CD4-positive, alpha-beta T cell (primary cell): ENCODE measurements at regions of chr17 and their contacts with region 1.

Region 1: DNA sequence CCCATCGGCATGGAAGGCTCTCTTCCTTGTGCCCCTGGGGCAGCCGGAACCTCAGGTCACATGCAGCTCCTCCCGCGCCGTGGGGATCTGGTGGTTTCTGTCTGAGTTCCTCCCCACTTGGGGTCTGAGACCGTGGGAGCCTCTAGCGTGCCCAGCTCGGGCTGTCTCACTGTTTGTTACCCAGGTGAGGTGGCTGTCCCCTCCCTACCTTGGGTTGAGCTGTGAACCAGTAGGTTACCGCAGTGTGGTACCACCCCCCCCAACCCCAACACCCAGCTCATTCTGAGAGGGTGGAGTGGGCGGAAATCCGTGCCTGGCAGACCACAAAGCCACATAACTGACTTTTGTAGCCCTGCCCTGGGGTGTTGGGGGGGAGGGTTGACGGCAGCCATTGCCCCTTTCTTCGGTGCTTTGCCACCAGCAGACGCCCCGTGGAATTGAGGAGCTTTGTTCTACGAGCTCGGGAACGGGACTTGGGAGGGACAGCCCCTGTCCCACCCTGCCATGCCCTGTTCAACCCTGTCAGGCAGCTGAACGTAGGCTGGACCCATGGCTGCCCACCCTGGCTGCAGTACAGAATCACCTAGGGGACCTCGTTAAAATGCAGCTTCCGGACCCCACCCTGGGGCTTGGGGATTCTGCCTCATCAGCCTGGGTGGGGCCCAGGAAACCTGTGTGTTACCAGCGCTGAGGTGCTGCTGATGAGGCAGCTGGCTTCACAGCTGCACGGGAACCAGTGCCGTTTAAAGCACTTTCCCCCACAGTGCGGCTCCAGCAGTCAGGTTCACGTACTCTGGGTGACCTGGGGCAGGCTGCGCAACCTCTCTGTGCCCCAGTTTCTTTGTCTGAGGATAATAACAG is 18.5 kb downstream of the RAP1GAP2 start:
- DNase-seq: peak; percentile 88 to 98 (median 93)
- ATAC-seq: peak; percentile 81
- H3K4me3 ChIP-seq: peak overlapping the region; percentile 54
- H3K4me3 Mint-ChIP-seq: peak overlapping the region; percentile 83
- H3K27ac ChIP-seq: peak overlapping the region; percentile 65 to 69
- H3K27ac Mint-ChIP-seq: peak overlapping the region; percentile 97
- H3K4me1 ChIP-seq: peaks cover 63% of the 10 kb centered on the region
- H3K4me1 Mint-ChIP-seq: peaks cover 40% of the 10 kb centered on the region
- H3K27me3 ChIP-seq: no peaks in the 10 kb centered on the region
- H3K27me3 Mint-ChIP-seq: no peaks in the 10 kb centered on the region
- CTCF ChIP-seq: no peak

Region 2: GRCh38 chr17:2401426-2402221 is 413.1 kb before region 1 on chr17:
- CTCF ChIA-PET with region 1: no interaction called
- POLR2A ChIA-PET with region 1: interaction called, 10 read pairs
- intact Hi-C with region 1: no loop called
- DNase-seq: peak; percentile 97 to 99 (median 99)
- ATAC-seq: peak; percentile 58
- H3K4me3 ChIP-seq: peak overlapping the region; percentile 93
- H3K4me3 Mint-ChIP-seq: peak overlapping the region; percentile 100
- H3K27ac ChIP-seq: peak overlapping the region; percentile 93 to 100
- H3K27ac Mint-ChIP-seq: peak overlapping the region; percentile 99
- H3K4me1 ChIP-seq: peaks cover 51% of the 10 kb centered on the region
- H3K4me1 Mint-ChIP-seq: peaks cover 47% of the 10 kb centered on the region
- H3K27me3 ChIP-seq: no peaks in the 10 kb centered on the region
- H3K27me3 Mint-ChIP-seq: no peaks in the 10 kb centered on the region
- CTCF ChIP-seq: no peak

Region 3: DNA sequence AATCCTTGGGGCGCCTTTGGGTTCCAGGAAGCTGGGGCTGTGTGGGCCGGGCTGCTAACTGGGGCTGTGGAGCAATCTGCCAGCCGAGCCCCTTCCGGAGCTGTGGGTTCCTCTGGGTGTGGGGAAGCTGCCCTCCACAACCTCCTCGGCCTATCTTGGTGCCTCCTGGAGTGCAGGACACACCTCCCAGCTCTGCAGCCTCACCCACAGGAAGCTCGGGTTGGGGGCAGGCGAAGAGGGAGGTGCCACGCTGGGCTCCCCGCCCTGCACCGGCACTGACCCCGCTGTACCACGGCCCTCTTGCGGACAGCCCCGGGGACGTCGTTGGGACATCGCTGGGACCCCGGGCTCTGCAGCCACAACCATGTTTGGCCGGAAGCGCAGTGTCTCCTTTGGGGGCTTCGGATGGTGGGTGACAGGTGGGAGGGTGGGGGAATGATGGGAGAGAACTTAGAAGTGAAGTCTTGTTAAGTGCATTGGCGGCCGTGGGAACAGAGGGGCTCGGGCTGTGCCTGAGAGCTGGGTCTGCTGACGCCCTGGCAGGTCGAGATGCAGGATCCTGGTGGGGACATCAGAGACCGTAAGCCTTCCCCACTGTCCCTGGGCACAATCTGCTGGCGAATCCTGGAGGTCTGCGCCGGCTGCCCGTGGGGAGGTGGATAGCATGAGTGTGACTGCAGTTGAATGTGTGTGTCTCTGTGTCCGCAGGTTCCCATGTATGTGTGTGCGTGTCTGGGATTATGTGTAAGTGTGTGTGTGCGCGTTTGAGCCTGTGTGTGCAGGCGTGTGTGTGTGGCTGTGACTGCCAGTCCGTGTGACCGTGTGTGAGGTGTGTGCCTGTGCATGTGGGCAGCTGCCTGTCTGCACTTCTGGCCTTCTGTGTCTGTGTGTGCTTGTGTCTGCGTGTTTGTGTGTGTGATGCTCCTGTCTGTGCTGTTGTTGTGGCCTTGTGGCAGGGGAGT is 18.3 kb before region 1 on chr17 and contains the start of gene RAP1GAP2:
- CTCF ChIA-PET with region 1: interaction called, 18 read pairs
- POLR2A ChIA-PET with region 1: interaction called, 213 read pairs
- intact Hi-C with region 1: loop called in 1 of 2 experiments (anchors 1 kb)
- DNase-seq: peak; percentile 45 to 94 (median 66)
- ATAC-seq: peak; percentile 91
- H3K4me3 ChIP-seq: peak within 1 kb of the TSS; percentile 68
- H3K4me3 Mint-ChIP-seq: peak within 1 kb of the TSS; percentile 92
- H3K27ac ChIP-seq: no peak within 1 kb of the TSS
- H3K27ac Mint-ChIP-seq: peak within 1 kb of the TSS; percentile 80
- H3K4me1 ChIP-seq: peaks cover 79% of the 10 kb centered on the region
- H3K4me1 Mint-ChIP-seq: peaks cover 79% of the 10 kb centered on the region
- H3K27me3 ChIP-seq: no peaks in the 10 kb centered on the region
- H3K27me3 Mint-ChIP-seq: no peaks in the 10 kb centered on the region
- CTCF ChIP-seq: no peak
- total RNA-seq, gene RAP1GAP2: 46.3 to 49.7 TPM

Region 4: GRCh38 chr17:2828397-2829038 is 13.8 kb after region 1 on chr17:
- CTCF ChIA-PET with region 1: interaction called, 10 read pairs
- POLR2A ChIA-PET with region 1: interaction called, 26 read pairs
- intact Hi-C with region 1: no loop called
- DNase-seq: peak; percentile 55 to 86 (median 74)
- ATAC-seq: peak; percentile 92
- H3K4me3 ChIP-seq: no peak overlapping the region
- H3K4me3 Mint-ChIP-seq: no peak overlapping the region
- H3K27ac ChIP-seq: no peak overlapping the region
- H3K27ac Mint-ChIP-seq: no peak overlapping the region
- H3K4me1 ChIP-seq: peaks cover 34% of the 10 kb centered on the region
- H3K4me1 Mint-ChIP-seq: peaks cover 27% of the 10 kb centered on the region
- H3K27me3 ChIP-seq: no peaks in the 10 kb centered on the region
- H3K27me3 Mint-ChIP-seq: no peaks in the 10 kb centered on the region
- CTCF ChIP-seq: peak; percentile 97

Region 5: DNA sequence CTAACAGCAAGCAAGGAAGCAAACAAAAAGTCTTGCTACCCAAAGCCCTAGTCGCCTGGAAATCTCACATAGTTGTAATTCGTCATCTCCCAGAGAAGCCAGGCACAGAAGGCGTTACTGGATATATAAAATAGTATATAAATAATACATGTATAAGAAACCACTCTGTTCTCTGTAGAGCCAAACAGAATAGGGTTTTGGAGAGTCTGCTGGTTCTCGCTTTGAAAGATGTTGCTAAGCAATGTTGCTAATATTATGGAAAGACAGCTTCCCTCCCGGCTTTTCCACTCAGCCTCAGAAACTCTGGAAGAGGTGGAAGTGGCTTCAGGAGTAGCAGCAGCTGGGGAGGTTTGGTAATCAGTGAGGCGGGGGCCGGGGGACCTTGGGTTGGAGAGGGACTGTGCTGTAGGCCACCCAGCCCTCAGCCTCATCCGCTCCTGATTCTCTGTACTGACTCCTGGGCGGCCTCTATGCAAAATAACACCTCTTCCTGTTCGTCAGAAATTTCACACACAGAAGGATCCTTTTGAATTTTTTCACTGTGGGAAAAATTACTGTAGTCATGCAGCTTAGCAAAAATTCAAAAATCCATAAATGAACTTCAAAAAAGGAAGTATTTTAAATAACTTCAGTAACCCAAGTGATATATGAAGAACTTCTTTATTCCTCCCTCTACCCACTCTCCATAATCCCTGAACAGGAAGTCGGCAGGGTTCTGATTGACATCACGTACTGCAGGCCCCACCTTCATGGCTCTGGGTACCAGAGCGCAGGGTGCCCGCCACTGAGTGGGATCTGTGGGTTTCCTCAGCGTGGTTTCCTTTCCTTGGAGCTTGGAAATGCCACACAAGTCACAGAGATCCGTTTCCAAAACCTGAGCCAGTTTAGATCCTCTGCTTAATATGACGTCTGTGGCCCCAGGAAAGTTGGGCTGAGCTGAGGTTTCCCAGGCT is 32.9 kb after region 1 on chr17:
- CTCF ChIA-PET with region 1: interaction called, 6 read pairs
- POLR2A ChIA-PET with region 1: interaction called, 10 read pairs
- intact Hi-C with region 1: no loop called
- DNase-seq: peak in 1 of 14 experiments; percentile 31
- ATAC-seq: no peak
- H3K4me3 ChIP-seq: no peak overlapping the region
- H3K4me3 Mint-ChIP-seq: peak overlapping the region; percentile 30
- H3K27ac ChIP-seq: no peak overlapping the region
- H3K27ac Mint-ChIP-seq: no peak overlapping the region
- H3K4me1 ChIP-seq: peaks cover 20% of the 10 kb centered on the region
- H3K4me1 Mint-ChIP-seq: peaks cover 25% of the 10 kb centered on the region
- H3K27me3 ChIP-seq: peaks cover 0 to 4% of the 10 kb centered on the region in 2 experiments
- H3K27me3 Mint-ChIP-seq: peaks cover 10% of the 10 kb centered on the region
- CTCF ChIP-seq: no peak

Region 6: GRCh38 chr17:3025421-3026124 is 210.9 kb after region 1 on chr17:
- CTCF ChIA-PET with region 1: no interaction called
- POLR2A ChIA-PET with region 1: no interaction called
- intact Hi-C with region 1: no loop called
- DNase-seq: peak in 1 of 14 experiments; percentile 9
- ATAC-seq: no peak
- H3K4me3 ChIP-seq: no peak overlapping the region
- H3K4me3 Mint-ChIP-seq: no peak overlapping the region
- H3K27ac ChIP-seq: no peak overlapping the region
- H3K27ac Mint-ChIP-seq: no peak overlapping the region
- H3K4me1 ChIP-seq: no peaks in the 10 kb centered on the region
- H3K4me1 Mint-ChIP-seq: no peaks in the 10 kb centered on the region
- H3K27me3 ChIP-seq: no peaks in the 10 kb centered on the region
- H3K27me3 Mint-ChIP-seq: no peaks in the 10 kb centered on the region
- CTCF ChIP-seq: no peak

Region 7: DNA sequence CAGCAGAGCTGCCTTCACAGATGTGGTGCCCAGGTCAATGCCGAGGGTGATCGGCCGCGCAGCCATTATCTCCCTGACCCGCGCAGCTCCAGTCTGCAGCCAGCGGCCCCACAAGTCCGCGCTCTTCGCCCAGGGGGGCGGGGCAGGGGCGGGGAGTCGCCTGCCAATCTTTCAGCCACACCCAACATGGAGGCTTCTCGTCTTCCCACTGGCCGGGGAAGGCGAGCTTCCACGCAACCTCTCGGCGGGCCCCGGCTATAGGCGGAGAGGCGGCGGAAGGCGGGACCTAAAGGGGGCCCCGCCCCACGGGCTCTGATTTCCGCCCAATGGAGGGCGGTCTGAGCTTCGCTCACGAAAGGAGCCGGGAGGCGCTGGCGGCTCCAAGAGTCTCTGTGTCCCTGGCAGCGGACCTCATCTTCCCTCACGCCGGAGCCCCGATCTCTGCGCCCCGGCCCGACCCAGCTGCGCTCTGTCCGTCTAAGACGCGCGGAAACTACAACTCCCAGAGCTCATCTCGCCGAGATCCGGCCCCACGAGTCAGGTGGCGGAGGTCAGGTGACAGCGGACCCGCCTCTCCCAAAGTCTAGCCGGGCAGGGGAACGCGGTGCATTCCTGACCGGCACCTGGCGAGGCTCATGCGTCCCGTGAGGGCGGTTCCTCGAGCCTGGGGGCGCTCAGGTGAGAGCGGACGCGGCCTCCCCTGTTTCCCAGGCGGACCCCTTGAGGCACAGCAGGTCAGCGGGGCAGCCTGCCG is 821.6 kb after region 1 on chr17 and contains the starts of genes CTNS and SHPK:
- CTCF ChIA-PET with region 1: no interaction called
- POLR2A ChIA-PET with region 1: interaction called, 11 read pairs
- intact Hi-C with region 1: no loop called
- DNase-seq: peak; percentile 86 to 96 (median 92)
- ATAC-seq: peak; percentile 98
- H3K4me3 ChIP-seq: peak within 1 kb of the TSS; percentile 80
- H3K4me3 Mint-ChIP-seq: peak within 1 kb of the TSS; percentile 98
- H3K27ac ChIP-seq: peak within 1 kb of the TSS; percentile 93 to 99
- H3K27ac Mint-ChIP-seq: peak within 1 kb of the TSS; percentile 99
- H3K4me1 ChIP-seq: peaks cover 27% of the 10 kb centered on the region
- H3K4me1 Mint-ChIP-seq: peaks cover 21% of the 10 kb centered on the region
- H3K27me3 ChIP-seq: no peaks in the 10 kb centered on the region
- H3K27me3 Mint-ChIP-seq: no peaks in the 10 kb centered on the region
- CTCF ChIP-seq: no peak
- total RNA-seq, gene CTNS: 3.3 to 4.9 TPM
- total RNA-seq, gene SHPK: 3.4 TPM